Sigmoid colon (tissue), 7 donors: ENCODE measurements at regions of chr4 and their contacts with region 1.

Region 1: GRCh38 chr4:101347557-101348366 is 436 bp upstream of the PPP3CA start:
- DNase-seq: peak; percentile 100
- H3K4me3 ChIP-seq: peak overlapping the region; percentile 86 to 95 (median 92)
- H3K27ac ChIP-seq: peak overlapping the region; percentile 92 to 97 (median 96)
- H3K4me1 ChIP-seq: peaks cover 0 to 39% (median 24%) of the 10 kb centered on the region in 4 donors
- H3K27me3 ChIP-seq: no peaks in the 10 kb centered on the region
- CTCF ChIP-seq: peak in 3 of 4 experiments; percentile 10 to 16 (median 14)
- EP300 ChIP-seq: no peak
- POLR2A ChIP-seq: peak; percentile 42 to 71

Region 2: GRCh38 chr4:100093091-100093866 is 1254.5 kb before region 1 on chr4:
- intact Hi-C with region 1: loop called (anchors 10 kb)
- DNase-seq: peak; percentile 92
- H3K4me3 ChIP-seq: no peak overlapping the region
- H3K27ac ChIP-seq: peak overlapping the region; percentile 18 to 49 (median 29)
- H3K4me1 ChIP-seq: peaks cover 0 to 11% (median 8%) of the 10 kb centered on the region in 4 donors
- H3K27me3 ChIP-seq: no peaks in the 10 kb centered on the region
- CTCF ChIP-seq: peak; percentile 42 to 80 (median 52)
- EP300 ChIP-seq: peak in 1 of 4 donors; percentile 21
- POLR2A ChIP-seq: no peak

Region 3: DNA sequence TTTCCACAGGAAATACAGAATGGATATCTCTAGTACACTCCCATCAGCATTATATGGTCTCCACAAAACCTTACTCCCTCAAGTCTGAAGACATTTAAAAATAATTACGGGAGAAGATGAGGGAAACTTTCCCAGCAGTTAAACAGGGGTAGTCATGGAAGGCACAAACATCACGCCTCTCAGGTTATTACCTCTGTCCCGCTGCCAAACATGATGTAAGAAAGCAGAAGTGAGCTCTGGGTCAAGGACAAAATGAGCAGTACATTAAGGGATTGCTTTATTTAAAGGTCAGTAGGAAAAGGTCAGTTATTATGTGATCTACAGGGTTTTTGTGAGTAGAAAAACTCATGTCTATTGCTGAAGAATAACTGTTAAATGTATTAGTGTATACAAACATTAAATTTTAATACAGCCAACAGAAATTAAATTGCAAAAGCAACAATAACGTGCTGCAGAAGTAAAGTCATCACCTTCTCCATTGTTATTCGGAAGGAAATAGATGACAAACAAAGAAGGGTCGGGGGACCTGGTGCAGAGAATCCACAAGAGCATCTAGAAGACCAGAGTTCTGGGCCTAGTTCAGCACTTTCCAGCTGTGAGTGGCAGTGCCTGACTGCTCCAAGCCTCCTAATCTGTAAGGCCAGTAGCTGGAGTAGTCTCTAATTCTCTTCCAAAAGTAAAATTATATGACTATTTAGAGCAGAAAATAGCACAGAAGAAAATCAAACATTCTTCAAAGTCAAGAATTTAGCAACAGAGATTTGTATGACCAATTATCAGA is 171.7 kb before region 1 on chr4:
- intact Hi-C with region 1: loop called (anchors 5 kb)
- DNase-seq: peak; percentile 65
- H3K4me3 ChIP-seq: no peak overlapping the region
- H3K27ac ChIP-seq: peak overlapping the region in 3 of 4 donors; percentile 29 to 64 (median 31)
- H3K4me1 ChIP-seq: peaks cover 0 to 46% (median 19%) of the 10 kb centered on the region in 4 donors
- H3K27me3 ChIP-seq: no peaks in the 10 kb centered on the region
- CTCF ChIP-seq: no peak
- EP300 ChIP-seq: no peak
- POLR2A ChIP-seq: no peak

Region 4: DNA sequence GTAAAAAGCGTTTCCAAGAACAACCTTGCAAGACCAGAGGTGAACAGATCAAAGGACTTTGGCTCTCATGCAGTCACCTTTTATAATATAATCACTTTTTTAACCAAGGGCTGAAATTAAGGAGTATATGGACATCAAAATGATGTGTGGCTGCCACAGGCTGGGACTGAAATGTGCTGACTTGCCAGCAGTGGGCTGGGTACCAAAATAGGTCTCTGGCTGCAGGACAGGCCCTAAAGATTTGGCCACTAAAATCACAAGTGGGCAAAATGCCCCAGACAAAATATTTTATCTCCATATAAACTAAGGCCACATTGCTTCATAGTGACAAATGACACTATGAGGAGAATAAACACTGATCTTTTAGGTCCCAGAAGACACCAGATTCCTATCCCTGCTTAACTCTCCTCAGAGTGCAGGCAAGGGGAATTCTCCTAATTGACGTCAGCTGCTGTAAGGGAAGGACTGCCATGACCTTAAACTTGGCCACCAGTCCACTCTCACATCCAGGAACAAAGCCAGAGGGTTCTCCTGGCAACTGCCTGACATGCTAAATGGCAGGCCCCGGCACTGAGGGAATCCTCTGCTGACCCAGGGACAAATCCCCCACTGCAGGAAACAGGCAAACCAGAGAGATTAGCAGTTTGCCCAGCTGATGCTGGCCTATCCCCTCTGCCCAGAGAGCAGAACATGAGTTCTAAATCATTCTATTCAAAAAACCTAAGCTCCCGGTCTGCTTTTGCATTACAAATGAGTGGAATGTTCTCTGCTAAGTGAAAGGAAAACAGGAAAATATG is 156.3 kb before region 1 on chr4:
- intact Hi-C with region 1: loop called (anchors 2 kb)
- DNase-seq: peak; percentile 91
- H3K4me3 ChIP-seq: no peak overlapping the region
- H3K27ac ChIP-seq: peak overlapping the region; percentile 75 to 83 (median 78)
- H3K4me1 ChIP-seq: peaks cover 0 to 49% (median 31%) of the 10 kb centered on the region in 4 donors
- H3K27me3 ChIP-seq: no peaks in the 10 kb centered on the region
- CTCF ChIP-seq: no peak
- EP300 ChIP-seq: peak; percentile 6 to 91 (median 90)
- POLR2A ChIP-seq: no peak

Region 5: GRCh38 chr4:101321481-101322042 is 26.2 kb before region 1 on chr4:
- intact Hi-C with region 1: loop called (anchors 2 kb)
- DNase-seq: no peak
- H3K4me3 ChIP-seq: no peak overlapping the region
- H3K27ac ChIP-seq: no peak overlapping the region
- H3K4me1 ChIP-seq: peaks cover 0 to 31% (median 22%) of the 10 kb centered on the region in 4 donors
- H3K27me3 ChIP-seq: no peaks in the 10 kb centered on the region
- CTCF ChIP-seq: no peak
- EP300 ChIP-seq: no peak
- POLR2A ChIP-seq: no peak